ENCODE measurements at regions of chrX and their contacts with region 1.

Region 1: DNA sequence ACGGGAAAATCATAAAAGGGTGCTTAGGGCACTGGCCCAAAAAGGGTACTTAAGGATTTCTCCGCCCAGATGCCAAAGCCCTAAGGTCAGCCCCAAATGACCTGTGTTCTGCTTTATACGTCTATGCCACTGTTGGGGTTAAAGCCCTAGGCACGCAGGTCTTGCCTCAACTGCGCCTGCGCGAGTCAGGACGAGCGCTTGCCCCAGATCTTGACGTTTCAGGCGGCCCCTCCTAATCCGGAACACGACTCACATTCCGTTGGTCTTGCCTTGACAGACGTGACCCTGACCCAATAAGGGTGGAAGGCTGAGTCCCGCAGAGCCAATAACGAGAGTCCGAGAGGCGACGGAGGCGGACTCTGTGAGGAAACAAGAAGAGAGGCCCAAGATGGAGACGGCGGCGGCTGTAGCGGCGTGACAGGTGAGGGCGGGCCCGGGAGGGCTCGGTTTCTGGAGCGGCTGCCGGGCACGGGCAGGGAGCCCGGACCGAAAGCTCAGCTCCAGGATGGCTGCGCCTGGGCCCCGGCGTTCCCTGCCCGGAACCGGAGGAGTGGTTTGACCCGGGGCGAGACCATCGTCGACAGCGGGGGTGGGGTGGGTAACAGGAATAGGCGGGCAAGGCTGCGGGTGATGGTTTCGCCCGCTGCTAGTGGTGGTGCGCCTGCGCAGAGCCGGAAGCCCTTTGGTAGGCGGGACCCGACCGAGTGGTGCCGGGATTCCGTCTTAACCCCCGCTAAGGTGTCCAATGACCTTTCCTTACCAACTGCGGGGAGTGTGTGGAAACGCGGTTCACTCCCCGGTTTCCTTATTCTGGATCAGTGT is at the start of gene ARAF:
- DNase-seq: peak; percentile 78 to 98 (median 96)
- ATAC-seq: peak; percentile 92
- H3K4me3 ChIP-seq: peak within 1 kb of the TSS; percentile 92
- H3K4me3 Mint-ChIP-seq: peak within 1 kb of the TSS; percentile 85 to 98 (median 92)
- H3K27ac ChIP-seq: peak within 1 kb of the TSS; percentile 92
- H3K27ac Mint-ChIP-seq: peak within 1 kb of the TSS; percentile 96 to 100 (median 97)
- H3K4me1 ChIP-seq: peaks cover 10 to 18% of the 10 kb centered on the region in 2 donors
- H3K4me1 Mint-ChIP-seq: peaks cover 12 to 58% (median 43%) of the 10 kb centered on the region in 7 donors
- H3K27me3 ChIP-seq: no peaks in the 10 kb centered on the region
- H3K27me3 Mint-ChIP-seq: no peaks in the 10 kb centered on the region
- total RNA-seq, gene ARAF: 87.3 to 130 (median 118) TPM

Region 2: DNA sequence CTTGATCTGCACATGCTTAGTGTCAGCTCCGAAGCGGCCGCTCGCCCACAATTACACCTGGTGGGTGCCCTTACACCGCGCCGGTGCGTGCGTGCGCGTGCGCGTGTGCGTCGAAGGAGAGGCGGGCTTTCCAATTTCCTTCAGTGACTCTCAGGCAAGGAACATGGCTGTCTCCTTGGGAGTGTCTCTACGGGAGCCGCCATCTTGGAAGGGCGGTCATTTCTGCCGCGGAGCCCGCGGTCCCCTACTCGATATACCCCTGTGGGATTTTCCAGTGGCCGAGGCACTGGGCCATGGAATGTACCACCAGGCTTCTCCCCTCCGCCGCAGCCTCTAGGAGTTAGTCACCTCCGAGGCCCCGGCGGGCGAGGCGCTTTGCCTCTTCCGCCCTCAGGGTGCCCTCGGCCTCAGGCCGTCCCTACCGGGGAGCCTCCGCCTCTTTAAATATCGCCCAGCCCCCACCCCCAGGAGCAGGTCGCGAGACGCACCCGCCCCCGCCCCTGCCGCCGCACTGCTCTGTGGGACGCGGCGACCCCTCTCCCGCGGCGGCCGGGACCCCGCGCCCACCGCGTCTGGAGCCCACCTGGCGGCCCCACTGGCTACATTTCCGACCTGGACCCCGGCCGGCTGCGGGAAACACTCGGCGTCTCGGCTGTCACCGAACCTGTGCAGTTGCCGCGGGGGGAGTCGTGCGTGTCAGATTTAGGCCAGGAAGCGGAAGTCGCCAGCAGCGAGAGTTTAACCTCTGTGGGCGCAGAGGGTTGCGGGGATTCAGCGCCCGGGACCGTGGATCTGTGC is 78.3 kb before region 1 on chrX and contains the start of gene ZNF41:
- CTCF ChIA-PET with region 1: no interaction called
- POLR2A ChIA-PET with region 1: interaction called, 3 read pairs
- intact Hi-C with region 1: loop called (anchors 1 kb)
- DNase-seq: peak; percentile 48 to 84 (median 76)
- ATAC-seq: peak; percentile 95
- H3K4me3 ChIP-seq: peak within 1 kb of the TSS; percentile 85
- H3K4me3 Mint-ChIP-seq: peak within 1 kb of the TSS; percentile 81 to 97 (median 90)
- H3K27ac ChIP-seq: peak within 1 kb of the TSS; percentile 88
- H3K27ac Mint-ChIP-seq: peak within 1 kb of the TSS; percentile 82 to 98 (median 96)
- H3K4me1 ChIP-seq: peaks cover 9 to 22% of the 10 kb centered on the region in 2 donors
- H3K4me1 Mint-ChIP-seq: peaks cover 22 to 50% (median 37%) of the 10 kb centered on the region in 7 donors
- H3K27me3 ChIP-seq: no peaks in the 10 kb centered on the region
- H3K27me3 Mint-ChIP-seq: no peaks in the 10 kb centered on the region
- total RNA-seq, gene ZNF41: 7.5 to 17.8 (median 14.7) TPM

Region 3: DNA sequence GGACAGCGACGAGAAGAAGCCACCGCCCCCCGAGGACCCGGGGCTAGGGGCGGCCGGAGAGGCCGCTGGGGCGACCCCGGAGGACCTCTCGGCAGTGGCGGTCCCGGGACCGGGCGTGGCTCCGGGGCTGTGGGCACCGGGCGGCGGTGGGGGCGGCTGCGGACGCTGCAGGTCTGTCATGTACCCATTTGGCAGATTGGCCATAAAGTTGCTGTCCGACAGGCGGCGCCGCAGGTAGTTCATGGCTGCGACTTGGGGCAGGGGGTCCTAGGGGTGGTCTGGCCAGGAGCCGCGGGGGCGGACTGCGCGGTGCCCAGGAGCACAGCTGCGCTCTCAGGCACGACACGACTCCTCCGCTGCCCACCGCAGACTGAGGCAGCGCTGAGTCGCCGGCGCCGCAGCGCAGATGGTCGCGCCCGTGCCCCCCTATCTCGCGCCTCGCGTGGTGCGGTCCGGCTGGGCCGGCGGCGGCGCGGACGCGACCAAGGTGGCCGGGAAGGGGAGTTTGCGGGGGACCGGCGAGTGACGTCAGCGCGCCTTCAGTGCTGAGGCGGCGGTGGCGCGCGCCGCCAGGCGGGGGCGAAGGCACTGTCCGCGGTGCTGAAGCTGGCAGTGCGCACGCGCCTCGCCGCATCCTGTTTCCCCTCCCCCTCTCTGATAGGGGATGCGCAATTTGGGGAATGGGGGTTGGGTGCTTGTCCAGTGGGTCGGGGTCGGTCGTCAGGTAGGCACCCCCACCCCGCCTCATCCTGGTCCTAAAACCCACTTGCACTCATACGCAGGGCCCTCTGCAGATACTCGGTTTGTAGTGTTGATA is 58.7 kb after region 1 on chrX and contains the start of gene SYN1:
- CTCF ChIA-PET with region 1: no interaction called
- POLR2A ChIA-PET with region 1: interaction called, 8 read pairs
- intact Hi-C with region 1: loop called in 1 of 2 experiments (anchors 1 kb)
- DNase-seq: peak; percentile 66 to 84 (median 75)
- ATAC-seq: peak; percentile 96
- H3K4me3 ChIP-seq: peak within 1 kb of the TSS; percentile 35
- H3K4me3 Mint-ChIP-seq: peak within 1 kb of the TSS; percentile 49 to 76 (median 69)
- H3K27ac ChIP-seq: no peak within 1 kb of the TSS
- H3K27ac Mint-ChIP-seq: peak within 1 kb of the TSS in 3 of 9 donors; percentile 32 to 63 (median 39)
- H3K4me1 ChIP-seq: peaks cover 4% of the 10 kb centered on the region in 2 donors
- H3K4me1 Mint-ChIP-seq: peaks cover 0 to 38% (median 13%) of the 10 kb centered on the region in 7 donors
- H3K27me3 ChIP-seq: no peaks in the 10 kb centered on the region
- H3K27me3 Mint-ChIP-seq: peaks cover 0 to 61% (median 3%) of the 10 kb centered on the region in 5 donors
- total RNA-seq, gene SYN1: 0.24 to 1.5 (median 0.97) TPM

Region 4: DNA sequence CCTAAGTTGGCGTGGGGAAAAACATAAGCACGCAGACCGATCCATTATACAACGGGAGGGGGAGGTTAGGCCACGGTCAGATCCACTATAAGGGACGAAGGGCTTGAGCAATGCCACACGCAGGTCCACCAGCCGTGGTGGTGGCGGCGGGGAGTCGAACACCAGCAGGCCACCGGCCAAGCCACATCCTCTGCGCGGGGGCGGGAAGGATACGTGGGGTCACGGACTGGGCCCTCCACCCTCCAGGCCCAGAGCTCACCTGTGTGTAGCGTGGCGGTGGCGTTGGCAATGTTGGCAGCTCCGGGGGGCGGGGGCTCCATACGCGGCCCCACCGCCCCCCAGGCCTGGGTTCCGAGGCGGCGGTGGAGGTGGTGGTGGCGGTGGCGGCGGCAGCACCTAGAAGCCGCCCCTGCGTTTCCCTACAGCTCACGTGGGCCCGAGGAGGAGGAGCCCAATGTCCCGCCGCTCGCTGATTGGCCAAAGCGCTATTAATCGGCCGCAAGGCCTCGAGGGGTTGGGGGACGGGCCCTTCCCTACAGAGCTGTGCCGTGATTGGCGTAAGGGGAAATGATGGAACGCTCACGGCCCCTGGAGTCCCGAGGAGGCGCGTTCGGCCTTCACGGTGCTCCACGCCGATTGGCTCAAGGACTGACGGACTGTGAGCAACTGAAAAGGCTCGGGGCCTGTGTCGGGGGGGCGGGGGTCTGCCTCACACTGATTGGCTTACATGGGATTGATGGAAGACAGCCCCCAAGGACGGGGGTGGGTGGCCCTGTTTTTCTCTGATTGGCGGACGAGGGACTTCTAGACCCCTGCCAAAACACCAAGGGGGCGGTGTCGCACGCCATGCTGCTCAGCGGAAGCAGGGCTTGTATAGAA is 89.4 kb after region 1 on chrX and contains the start of gene ELK1:
- CTCF ChIA-PET with region 1: no interaction called
- POLR2A ChIA-PET with region 1: interaction called, 11 read pairs
- intact Hi-C with region 1: loop called (anchors 1 kb)
- DNase-seq: peak; percentile 67 to 92 (median 88)
- ATAC-seq: peak; percentile 95
- H3K4me3 ChIP-seq: peak within 1 kb of the TSS; percentile 70
- H3K4me3 Mint-ChIP-seq: peak within 1 kb of the TSS; percentile 87 to 96 (median 90)
- H3K27ac ChIP-seq: peak within 1 kb of the TSS; percentile 85
- H3K27ac Mint-ChIP-seq: peak within 1 kb of the TSS; percentile 89 to 97 (median 95)
- H3K4me1 ChIP-seq: peaks cover 12 to 16% of the 10 kb centered on the region in 2 donors
- H3K4me1 Mint-ChIP-seq: peaks cover 35 to 52% (median 48%) of the 10 kb centered on the region in 7 donors
- H3K27me3 ChIP-seq: no peaks in the 10 kb centered on the region
- H3K27me3 Mint-ChIP-seq: no peaks in the 10 kb centered on the region
- total RNA-seq, gene ELK1: 29.3 to 62.4 (median 38.1) TPM

Region 5: GRCh38 chrX:47836164-47837072 is 275.4 kb after region 1 on chrX and contains the start of gene ZNF81:
- CTCF ChIA-PET with region 1: no interaction called
- POLR2A ChIA-PET with region 1: interaction called, 3 read pairs
- intact Hi-C with region 1: loop called (anchors 2 to 5 kb)
- DNase-seq: peak; percentile 73 to 91 (median 83)
- ATAC-seq: peak; percentile 96
- H3K4me3 ChIP-seq: peak within 1 kb of the TSS; percentile 67
- H3K4me3 Mint-ChIP-seq: peak within 1 kb of the TSS; percentile 96 to 99 (median 98)
- H3K27ac ChIP-seq: peak within 1 kb of the TSS; percentile 79
- H3K27ac Mint-ChIP-seq: peak within 1 kb of the TSS; percentile 94 to 99 (median 97)
- H3K4me1 ChIP-seq: peaks cover 4 to 6% of the 10 kb centered on the region in 2 donors
- H3K4me1 Mint-ChIP-seq: peaks cover 1 to 36% (median 26%) of the 10 kb centered on the region in 7 donors
- H3K27me3 ChIP-seq: no peaks in the 10 kb centered on the region
- H3K27me3 Mint-ChIP-seq: no peaks in the 10 kb centered on the region
- total RNA-seq, gene ZNF81: 11.0 to 14.7 (median 11.7) TPM

Measured in naive thymus-derived CD4-positive, alpha-beta T cell (primary cell).